GM12878 (cell line): ENCODE measurements at regions of chr17 and their contacts with region 1.

Region 1: GRCh38 chr17:7004398-7005253 is 7.8 kb upstream of the RNASEK start:
- DNase-seq: peak; percentile 26
- ATAC-seq: peak; percentile 93
- H3K4me3 ChIP-seq: no peak overlapping the region
- H3K27ac ChIP-seq: no peak overlapping the region
- H3K4me1 ChIP-seq: no peaks in the 10 kb centered on the region
- H3K27me3 ChIP-seq: no peaks in the 10 kb centered on the region
- CTCF ChIP-seq: peak; percentile 56 to 75 (median 73); a peak in 5 of 6 replicates
- EP300 ChIP-seq: no peak
- POLR2A ChIP-seq: no peak
- RAD21 ChIP-seq: peak; percentile 89

Region 2: DNA sequence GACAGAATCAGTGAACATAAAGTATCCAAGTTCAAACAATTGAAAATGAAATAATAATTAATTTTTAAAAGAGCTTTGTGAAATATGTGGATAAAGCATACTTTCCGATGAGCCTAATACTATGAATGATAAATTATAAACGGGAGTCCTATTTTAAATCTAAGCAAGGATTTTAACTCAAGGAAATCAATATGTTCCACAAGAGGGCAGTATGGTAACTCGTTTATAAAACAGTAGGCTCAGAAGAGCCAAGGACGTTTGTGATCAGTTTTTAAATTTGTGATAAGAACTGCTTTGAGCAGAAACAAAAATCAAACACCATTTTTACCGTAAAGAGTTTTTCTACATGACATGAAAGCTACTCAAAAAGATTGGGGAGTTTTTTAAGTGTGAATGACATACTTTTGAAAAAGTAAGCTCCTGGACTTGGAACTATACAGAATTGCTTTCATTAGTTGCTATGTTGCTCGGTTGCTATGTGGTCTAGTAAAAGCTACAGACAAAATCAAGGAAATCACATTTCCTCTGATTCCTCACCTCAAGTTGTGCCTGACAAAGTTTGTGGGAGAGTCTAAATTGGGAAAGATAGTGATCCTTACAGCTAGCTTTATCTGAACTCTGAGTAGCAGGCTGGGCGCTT is 161.3 kb before region 1 on chr17:
- CTCF ChIA-PET with region 1: interaction called, 116 read pairs
- POLR2A ChIA-PET with region 1: interaction called, 4 read pairs
- RAD21 ChIA-PET with region 1: interaction called, 40 read pairs
- SMC1A ChIA-PET with region 1: interaction called, 51 read pairs
- in situ Hi-C with region 1: loop called (anchors 10 kb)
- intact Hi-C with region 1: loop called (anchors 2 kb)
- DNase-seq: no peak
- ATAC-seq: peak; percentile 59; the same call in 2 of the 3 replicates
- H3K4me3 ChIP-seq: no peak overlapping the region
- H3K27ac ChIP-seq: no peak overlapping the region
- H3K4me1 ChIP-seq: no peaks in the 10 kb centered on the region
- H3K27me3 ChIP-seq: no peaks in the 10 kb centered on the region
- CTCF ChIP-seq: peak; percentile 16 to 52 (median 34); a peak in 4 of 6 replicates
- EP300 ChIP-seq: no peak
- POLR2A ChIP-seq: no peak
- RAD21 ChIP-seq: peak; percentile 45

Region 3: DNA sequence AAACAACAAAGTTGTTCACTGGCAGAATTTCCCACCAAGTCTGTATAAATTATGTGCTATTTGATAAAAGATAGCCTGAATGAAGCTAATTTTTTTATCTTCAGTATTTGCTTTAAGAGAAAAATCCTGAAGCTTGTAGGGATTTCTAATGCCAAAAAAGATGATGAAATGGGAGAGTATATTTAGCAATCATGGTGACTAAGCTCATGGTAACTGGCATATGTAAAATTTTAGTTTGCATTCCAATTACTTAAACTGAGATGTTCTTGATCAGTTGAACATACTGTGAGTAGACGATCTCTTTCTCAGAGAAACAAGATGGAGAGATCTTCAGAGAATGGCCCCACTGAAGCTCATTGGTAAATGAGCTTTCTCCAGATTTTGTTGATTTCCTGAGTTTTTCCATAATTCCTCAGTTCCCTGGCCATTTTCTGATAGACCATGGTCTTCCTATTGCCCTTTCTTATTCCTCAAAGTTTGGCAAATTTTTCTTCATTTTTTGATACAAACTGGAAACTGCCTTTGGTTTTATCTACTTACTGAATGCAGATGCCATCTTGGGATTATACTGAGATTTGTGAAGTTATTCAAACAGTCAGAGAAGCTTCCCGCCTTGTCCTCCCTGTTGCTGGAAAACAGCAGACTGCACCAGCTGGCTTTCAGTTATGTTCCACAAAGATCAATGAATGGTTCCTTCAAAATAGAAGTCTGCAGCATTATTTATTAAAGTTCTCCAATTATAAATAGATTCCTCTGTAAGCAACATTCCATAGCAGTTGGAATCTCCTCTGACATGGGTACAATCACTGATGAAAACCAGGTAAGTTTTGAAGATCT is 77.1 kb before region 1 on chr17:
- CTCF ChIA-PET with region 1: interaction called, 36 read pairs
- POLR2A ChIA-PET with region 1: no interaction called
- RAD21 ChIA-PET with region 1: interaction called, 7 read pairs
- SMC1A ChIA-PET with region 1: interaction called, 19 read pairs
- in situ Hi-C with region 1: no loop called
- intact Hi-C with region 1: no loop called
- DNase-seq: no peak
- ATAC-seq: no peak
- H3K4me3 ChIP-seq: no peak overlapping the region
- H3K27ac ChIP-seq: no peak overlapping the region
- H3K4me1 ChIP-seq: no peaks in the 10 kb centered on the region
- H3K27me3 ChIP-seq: no peaks in the 10 kb centered on the region
- CTCF ChIP-seq: no peak
- EP300 ChIP-seq: no peak
- POLR2A ChIP-seq: no peak
- RAD21 ChIP-seq: no peak

Region 4: DNA sequence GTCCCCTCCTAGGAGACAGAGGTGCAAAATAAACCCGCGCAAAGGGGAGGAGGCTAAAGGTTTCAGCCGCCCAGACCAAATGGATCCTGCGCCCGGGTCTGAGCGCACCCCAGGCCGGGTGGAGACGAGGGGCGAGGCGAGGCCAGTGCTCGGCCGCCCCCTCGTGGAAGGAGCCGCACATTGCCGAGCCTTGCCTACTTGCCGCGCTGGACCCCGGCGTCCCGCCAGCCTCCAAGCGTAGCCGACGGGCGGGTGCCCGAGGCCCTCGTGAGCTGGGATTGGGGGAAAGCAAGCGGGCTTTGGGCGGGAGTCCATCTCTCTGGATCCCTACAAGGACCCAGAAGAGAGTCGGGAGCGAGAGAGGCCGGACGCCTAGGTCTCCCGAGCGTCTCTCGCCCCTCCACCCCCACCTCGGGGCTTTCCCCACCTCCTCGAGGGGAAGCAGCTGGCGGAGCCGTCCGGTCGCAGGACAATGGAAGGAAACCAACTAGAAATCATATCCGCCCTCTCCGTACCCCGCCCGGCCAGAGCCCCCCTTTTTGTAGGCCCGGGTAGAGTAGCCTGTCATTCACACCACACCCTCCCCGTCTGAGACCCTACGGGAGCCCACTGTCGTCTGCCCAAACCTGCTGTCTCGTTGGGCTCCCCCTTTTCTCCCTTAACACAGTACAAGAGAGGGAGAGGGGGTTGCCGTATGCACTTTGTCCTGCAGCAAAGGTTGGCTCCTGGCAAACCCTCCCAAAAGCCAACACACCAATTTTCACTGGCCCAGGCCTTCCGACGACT is 17.6 kb after region 1 on chr17:
- CTCF ChIA-PET with region 1: interaction called, 167 read pairs
- POLR2A ChIA-PET with region 1: no interaction called
- RAD21 ChIA-PET with region 1: interaction called, 14 read pairs
- SMC1A ChIA-PET with region 1: interaction called, 22 read pairs
- in situ Hi-C with region 1: no loop called
- intact Hi-C with region 1: no loop called
- DNase-seq: no peak
- ATAC-seq: peak; percentile 86
- H3K4me3 ChIP-seq: peak overlapping the region; percentile 40; the same call in 1 of the 2 replicates
- H3K27ac ChIP-seq: peak overlapping the region; percentile 18; the same call in 1 of the 2 replicates
- H3K4me1 ChIP-seq: peaks cover 25% of the 10 kb centered on the region
- H3K27me3 ChIP-seq: no peaks in the 10 kb centered on the region
- CTCF ChIP-seq: peak; percentile 93 to 96 (median 96)
- EP300 ChIP-seq: no peak
- POLR2A ChIP-seq: peak; percentile 31; the same call in 1 of the 2 replicates
- RAD21 ChIP-seq: peak; percentile 72

Region 5: GRCh38 chr17:7380321-7380720 is 375.7 kb after region 1 on chr17:
- CTCF ChIA-PET with region 1: no interaction called
- POLR2A ChIA-PET with region 1: no interaction called
- RAD21 ChIA-PET with region 1: no interaction called
- SMC1A ChIA-PET with region 1: no interaction called
- in situ Hi-C with region 1: no loop called
- intact Hi-C with region 1: no loop called
- DNase-seq: no peak
- ATAC-seq: no peak
- H3K4me3 ChIP-seq: no peak overlapping the region
- H3K27ac ChIP-seq: no peak overlapping the region
- H3K4me1 ChIP-seq: peaks cover 8% of the 10 kb centered on the region; the same call in 1 of the 2 replicates
- H3K27me3 ChIP-seq: peaks cover 4 to 5% of the 10 kb centered on the region in 2 experiments; a peak in 3 of 4 replicates
- CTCF ChIP-seq: no peak
- EP300 ChIP-seq: no peak
- POLR2A ChIP-seq: no peak
- RAD21 ChIP-seq: no peak